ENCODE measurements at regions of chr17 and their contacts with region 1.

Region 1: DNA sequence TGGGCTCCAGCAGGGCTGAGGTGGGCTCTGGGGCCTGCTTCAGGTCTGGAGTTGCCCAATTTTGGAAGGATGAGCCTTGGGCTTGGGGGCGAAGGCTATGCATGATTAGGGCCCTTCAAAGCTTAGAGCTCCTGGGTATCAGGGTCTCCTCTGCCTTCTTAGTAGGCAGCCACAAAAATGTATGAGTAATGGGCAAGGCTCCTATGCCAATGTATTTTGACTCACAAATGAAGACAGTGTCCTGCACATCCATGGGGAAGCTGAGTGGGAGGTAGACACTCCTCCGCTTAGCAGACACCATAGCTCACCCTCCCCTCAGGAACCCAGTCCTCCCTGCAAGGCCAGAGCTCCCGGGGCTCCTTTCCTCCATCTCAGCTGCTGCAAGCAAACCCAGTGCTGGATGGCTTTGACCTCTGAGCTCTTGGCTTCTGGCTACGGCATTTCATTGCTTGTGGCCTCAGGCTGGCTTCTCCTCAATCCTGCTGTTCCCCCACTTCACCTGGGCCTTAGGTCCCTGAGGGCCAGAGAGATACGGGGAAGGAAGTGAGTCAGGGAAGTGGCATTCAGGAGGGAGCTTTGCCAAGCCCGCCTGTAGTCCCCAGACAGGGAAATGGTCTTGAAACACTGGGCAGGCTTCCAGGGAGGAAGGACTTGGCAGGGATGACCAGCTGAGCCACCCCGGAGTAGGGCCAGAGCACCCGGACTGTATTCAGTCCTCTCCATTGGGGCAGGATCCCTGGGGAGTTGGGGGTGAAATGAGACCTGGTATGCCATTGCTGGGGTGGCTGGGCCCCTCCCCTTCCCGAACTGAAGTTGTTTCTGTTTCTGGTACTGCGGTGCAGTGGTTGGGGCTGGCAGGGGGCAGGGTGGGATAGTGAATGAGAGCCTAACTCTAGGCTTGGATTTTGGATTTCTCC is 4.4 kb downstream of the ABCC3 start:
- DNase-seq: peak; percentile 75
- H3K4me3 ChIP-seq: no peak overlapping the region
- H3K27me3 ChIP-seq: no peaks in the 10 kb centered on the region
- CTCF ChIP-seq: no peak

Region 2: GRCh38 chr17:50691545-50692447 is 52.7 kb after region 1 on chr17:
- CTCF ChIA-PET with region 1: interaction called, 31 read pairs
- POLR2A ChIA-PET with region 1: interaction called, 5 read pairs
- DNase-seq: no peak
- H3K4me3 ChIP-seq: no peak overlapping the region
- H3K27me3 ChIP-seq: no peaks in the 10 kb centered on the region
- CTCF ChIP-seq: no peak

Region 3: GRCh38 chr17:50699410-50700074 is 60.4 kb after region 1 on chr17:
- CTCF ChIA-PET with region 1: interaction called, 31 read pairs
- POLR2A ChIA-PET with region 1: no interaction called
- DNase-seq: no peak
- H3K4me3 ChIP-seq: no peak overlapping the region
- H3K27me3 ChIP-seq: no peaks in the 10 kb centered on the region
- CTCF ChIP-seq: no peak

Measured in BJ (cell line).